PC-3 (cell line): ENCODE measurements at regions of chr1 and their contacts with region 1.

Region 1: GRCh38 chr1:53837924-53838652 is at the start of gene NDC1:
- DNase-seq: peak; percentile 96
- ATAC-seq: peak; percentile 89
- H3K4me3 ChIP-seq: peak within 1 kb of the TSS; percentile 95
- H3K27ac ChIP-seq: peak within 1 kb of the TSS; percentile 80
- H3K4me1 ChIP-seq: peaks cover 23% of the 10 kb centered on the region
- H3K27me3 ChIP-seq: no peaks in the 10 kb centered on the region
- CTCF ChIP-seq: no peak
- total RNA-seq, gene NDC1: 59.3 and 63.6 TPM in 2 replicates

Region 2: GRCh38 chr1:53681977-53682685 is 156.0 kb before region 1 on chr1:
- CTCF ChIA-PET with region 1: no interaction called
- POLR2A ChIA-PET with region 1: no interaction called
- intact Hi-C with region 1: no loop called
- DNase-seq: peak; percentile 71
- ATAC-seq: peak; percentile 87
- H3K4me3 ChIP-seq: no peak overlapping the region
- H3K27ac ChIP-seq: no peak overlapping the region
- H3K4me1 ChIP-seq: no peaks in the 10 kb centered on the region
- H3K27me3 ChIP-seq: no peaks in the 10 kb centered on the region
- CTCF ChIP-seq: peak; percentile 86

Region 3: GRCh38 chr1:53739109-53739681 is 98.9 kb before region 1 on chr1 and contains the start of gene GLIS1:
- CTCF ChIA-PET with region 1: no interaction called
- POLR2A ChIA-PET with region 1: no interaction called
- intact Hi-C with region 1: loop called (anchors 5 kb)
- DNase-seq: peak; percentile 91
- ATAC-seq: peak; percentile 87
- H3K4me3 ChIP-seq: peak within 1 kb of the TSS; percentile 83
- H3K27ac ChIP-seq: peak within 1 kb of the TSS; percentile 83
- H3K4me1 ChIP-seq: peaks cover 48% of the 10 kb centered on the region
- H3K27me3 ChIP-seq: no peaks in the 10 kb centered on the region
- CTCF ChIP-seq: no peak
- total RNA-seq, gene GLIS1: 1.7 and 2.6 TPM in 2 replicates

Region 4: DNA sequence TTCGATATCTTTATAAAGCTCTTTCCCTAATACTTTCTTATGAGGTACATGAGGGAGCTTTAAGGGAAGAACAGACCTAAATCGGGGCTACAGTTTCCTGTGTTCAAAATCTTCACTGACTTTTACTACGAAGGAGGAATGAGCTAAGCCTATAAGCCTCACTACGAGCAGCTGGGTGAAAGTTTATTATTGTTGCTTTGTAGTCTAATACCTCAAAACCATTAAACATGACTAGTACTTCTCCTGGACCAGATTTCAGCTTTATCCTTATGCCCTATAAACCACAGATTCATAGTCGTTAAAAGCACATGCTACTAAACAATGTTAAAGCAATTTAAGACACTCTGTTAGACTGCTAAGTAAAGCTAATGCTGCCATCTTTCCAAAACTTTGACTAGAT is 30.2 kb before region 1 on chr1:
- CTCF ChIA-PET with region 1: no interaction called
- POLR2A ChIA-PET with region 1: no interaction called
- intact Hi-C with region 1: loop called (anchors 2 kb)
- DNase-seq: no peak
- ATAC-seq: peak; percentile 54
- H3K4me3 ChIP-seq: no peak overlapping the region
- H3K27ac ChIP-seq: peak overlapping the region; percentile 20
- H3K4me1 ChIP-seq: peaks cover 54% of the 10 kb centered on the region
- H3K27me3 ChIP-seq: no peaks in the 10 kb centered on the region
- CTCF ChIP-seq: no peak